ENCODE measurements at regions of chr5 and their contacts with region 1.

Region 1: DNA sequence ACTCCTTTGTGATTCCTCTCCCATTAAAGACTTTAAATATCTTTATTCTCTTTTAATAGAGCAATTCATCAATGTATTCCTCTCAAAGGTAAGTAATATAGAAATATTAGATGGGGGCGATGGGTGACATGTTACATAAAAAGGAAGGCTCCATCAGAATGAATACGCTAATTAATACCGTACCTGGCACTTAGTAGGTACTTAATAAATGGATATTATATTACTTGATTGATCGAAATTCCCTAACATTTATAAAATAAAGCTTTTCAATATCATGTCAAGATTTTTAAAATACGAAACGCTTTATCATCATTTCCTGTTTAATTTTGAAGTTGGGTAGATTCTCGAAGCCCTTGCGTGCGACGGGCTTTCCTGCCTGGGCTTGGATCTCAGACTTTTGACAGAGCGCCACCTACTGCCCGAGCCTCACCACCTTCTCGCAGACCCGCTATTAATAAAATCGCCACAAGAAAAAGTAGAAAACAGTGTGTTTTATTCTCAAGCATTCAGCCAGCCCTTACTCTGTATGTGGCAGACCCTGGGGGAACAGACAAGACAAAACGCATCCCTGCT is 99.4 kb downstream of the C5orf15 start:
- DNase-seq: peak; percentile 64
- ATAC-seq: peak; percentile 83
- H3K4me3 Mint-ChIP-seq: no peak overlapping the region
- H3K27ac Mint-ChIP-seq: peak overlapping the region; percentile 25
- H3K4me1 Mint-ChIP-seq: peaks cover 18% of the 10 kb centered on the region
- H3K27me3 Mint-ChIP-seq: no peaks in the 10 kb centered on the region
- CTCF ChIP-seq: no peak

Region 2: GRCh38 chr5:132787076-132787475 is 1082.0 kb before region 1 on chr5:
- CTCF ChIA-PET with region 1: no interaction called
- POLR2A ChIA-PET with region 1: no interaction called
- intact Hi-C with region 1: no loop called
- DNase-seq: no peak
- ATAC-seq: no peak
- H3K4me3 Mint-ChIP-seq: no peak overlapping the region
- H3K27ac Mint-ChIP-seq: no peak overlapping the region
- H3K4me1 Mint-ChIP-seq: no peaks in the 10 kb centered on the region
- H3K27me3 Mint-ChIP-seq: peaks cover 28% of the 10 kb centered on the region
- CTCF ChIP-seq: no peak

Region 3: DNA sequence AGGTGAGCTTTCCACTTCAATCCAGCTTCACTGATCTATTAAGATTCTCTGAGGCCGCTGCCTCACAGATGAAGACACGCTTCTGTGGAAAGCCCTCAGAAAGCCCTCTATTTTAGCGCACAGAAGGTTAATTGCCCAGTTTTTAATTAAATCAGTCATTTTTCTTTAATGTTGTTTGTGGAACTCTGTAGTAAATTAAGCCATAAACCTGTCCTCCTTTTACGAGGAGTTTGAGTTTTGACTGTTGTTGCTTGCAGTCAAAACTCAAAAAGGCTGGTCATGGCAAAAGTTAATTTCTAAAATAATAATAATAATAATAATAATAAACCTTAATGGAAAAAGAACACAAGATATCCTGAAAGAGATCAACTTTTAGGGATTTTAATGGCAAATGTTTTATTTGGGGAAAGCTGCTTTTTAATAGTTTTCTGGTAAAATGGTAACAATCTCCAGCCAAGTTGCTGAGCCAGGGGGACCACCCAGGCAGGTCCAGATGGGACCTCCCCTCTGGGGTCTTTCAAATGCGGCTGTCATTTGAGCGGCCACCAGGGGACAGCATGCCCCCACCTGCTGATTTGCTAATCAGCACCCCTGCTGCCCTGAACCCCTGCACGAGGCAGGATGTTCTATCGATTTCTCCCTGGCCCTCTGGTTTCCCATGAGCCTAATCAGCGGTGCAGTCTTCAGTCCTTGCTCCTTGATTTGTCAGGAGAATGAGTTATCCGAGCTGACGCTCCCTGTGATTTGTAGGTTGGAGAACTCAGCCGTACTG is 503.9 kb before region 1 on chr5:
- CTCF ChIA-PET with region 1: interaction called, 16 read pairs
- POLR2A ChIA-PET with region 1: no interaction called
- intact Hi-C with region 1: loop called (anchors 1 kb)
- DNase-seq: no peak
- ATAC-seq: peak; percentile 50
- H3K4me3 Mint-ChIP-seq: no peak overlapping the region
- H3K27ac Mint-ChIP-seq: no peak overlapping the region
- H3K4me1 Mint-ChIP-seq: no peaks in the 10 kb centered on the region
- H3K27me3 Mint-ChIP-seq: peaks cover 7% of the 10 kb centered on the region
- CTCF ChIP-seq: no peak

Region 4: GRCh38 chr5:133552931-133553525 is 316.0 kb before region 1 on chr5:
- CTCF ChIA-PET with region 1: interaction called, 7 read pairs
- POLR2A ChIA-PET with region 1: no interaction called
- intact Hi-C with region 1: loop called (anchors 1 kb)
- DNase-seq: peak; percentile 46
- ATAC-seq: peak; percentile 71
- H3K4me3 Mint-ChIP-seq: no peak overlapping the region
- H3K27ac Mint-ChIP-seq: no peak overlapping the region
- H3K4me1 Mint-ChIP-seq: no peaks in the 10 kb centered on the region
- H3K27me3 Mint-ChIP-seq: peaks cover 33% of the 10 kb centered on the region
- CTCF ChIP-seq: no peak

Region 5: DNA sequence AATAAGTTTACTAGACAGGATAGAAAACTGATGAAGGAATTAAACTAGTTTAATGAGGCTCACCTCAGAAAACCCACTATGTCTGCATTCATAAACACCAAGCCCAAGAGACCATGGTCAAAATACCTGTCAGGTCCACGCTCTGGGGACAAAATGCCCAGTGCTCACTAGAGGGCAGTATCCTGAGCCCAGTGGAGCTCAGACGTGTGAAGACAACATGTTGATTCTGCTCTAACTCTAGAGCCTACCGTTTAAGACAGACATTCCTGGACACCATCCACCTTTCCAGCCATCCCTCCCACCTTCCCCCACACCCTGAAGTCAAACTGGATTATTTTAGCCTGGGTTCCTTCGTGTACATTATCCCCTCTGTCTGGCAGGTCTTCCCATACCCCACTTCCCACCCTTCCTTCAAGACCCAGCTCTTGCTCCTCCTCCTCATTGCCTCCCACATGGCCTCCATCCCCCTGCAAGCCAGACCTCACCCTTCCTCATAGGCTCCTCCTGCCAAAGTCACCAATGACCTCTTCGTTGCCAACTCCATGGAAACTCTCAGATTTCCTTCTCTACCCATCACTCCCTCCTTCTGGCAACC is 114.4 kb before region 1 on chr5:
- CTCF ChIA-PET with region 1: interaction called, 14 read pairs
- POLR2A ChIA-PET with region 1: no interaction called
- intact Hi-C with region 1: loop called (anchors 1 kb)
- DNase-seq: no peak
- ATAC-seq: peak; percentile 34
- H3K4me3 Mint-ChIP-seq: no peak overlapping the region
- H3K27ac Mint-ChIP-seq: no peak overlapping the region
- H3K4me1 Mint-ChIP-seq: no peaks in the 10 kb centered on the region
- H3K27me3 Mint-ChIP-seq: peaks cover 12% of the 10 kb centered on the region
- CTCF ChIP-seq: no peak

Region 6: DNA sequence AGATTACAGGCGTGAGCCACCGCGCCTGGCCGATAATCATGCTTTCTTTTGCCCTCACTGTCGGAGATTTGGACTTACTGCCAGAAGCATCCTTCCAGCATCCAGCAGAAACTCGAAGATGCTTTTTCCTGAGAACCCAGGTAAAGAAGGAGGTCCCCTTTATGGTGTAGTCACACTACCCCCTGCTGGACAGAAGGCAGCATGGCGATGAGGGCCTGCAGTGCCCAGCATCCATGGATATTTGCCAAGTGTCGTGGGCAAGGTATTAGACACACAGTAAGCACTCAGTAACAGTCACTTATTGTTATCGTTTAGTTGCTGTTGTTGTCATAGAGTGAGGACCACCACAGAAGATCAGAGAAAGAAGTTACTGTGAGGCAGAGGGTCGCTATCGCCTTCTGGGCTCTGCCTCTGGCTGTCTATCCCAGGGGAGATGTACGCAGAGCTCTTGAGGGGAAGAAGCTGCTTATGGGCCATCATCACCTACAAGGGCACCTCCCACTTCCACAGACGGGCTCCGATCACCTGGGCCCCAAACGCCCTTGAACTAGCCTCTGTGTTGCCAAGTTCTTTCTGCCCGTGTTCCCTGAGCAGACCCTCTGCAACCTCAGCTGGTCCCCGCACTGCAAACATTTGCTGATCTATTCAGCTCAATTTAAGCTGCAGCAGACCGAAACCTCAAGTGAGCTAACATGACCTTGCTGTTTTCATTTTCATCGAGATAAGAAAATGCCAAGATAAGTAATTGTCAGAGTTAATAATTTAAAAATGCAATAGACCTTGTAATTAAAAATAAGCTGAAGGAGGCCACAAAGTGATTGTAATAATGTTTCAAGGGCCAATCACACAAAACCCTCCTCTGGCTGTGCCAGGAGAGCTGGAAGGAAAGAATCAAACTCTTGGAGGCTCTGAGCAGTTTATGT is 75.5 kb after region 1 on chr5:
- CTCF ChIA-PET with region 1: interaction called, 7 read pairs
- POLR2A ChIA-PET with region 1: no interaction called
- intact Hi-C with region 1: loop called (anchors 1 kb)
- DNase-seq: no peak
- ATAC-seq: peak; percentile 87
- H3K4me3 Mint-ChIP-seq: no peak overlapping the region
- H3K27ac Mint-ChIP-seq: no peak overlapping the region
- H3K4me1 Mint-ChIP-seq: peaks cover 44% of the 10 kb centered on the region
- H3K27me3 Mint-ChIP-seq: no peaks in the 10 kb centered on the region
- CTCF ChIP-seq: no peak